GM12878 (cell line): ENCODE measurements at regions of chr3 and their contacts with region 1.

Region 1: GRCh38 chr3:115092220-115092791 is 54.8 kb downstream of the ZBTB20 start:
- DNase-seq: peak; percentile 26
- ATAC-seq: peak; percentile 81
- H3K4me3 ChIP-seq: no peak overlapping the region
- H3K27ac ChIP-seq: no peak overlapping the region
- H3K4me1 ChIP-seq: no peaks in the 10 kb centered on the region
- H3K27me3 ChIP-seq: no peaks in the 10 kb centered on the region
- CTCF ChIP-seq: peak; percentile 78 to 82 (median 78)
- EP300 ChIP-seq: no peak
- POLR2A ChIP-seq: no peak
- RAD21 ChIP-seq: peak; percentile 93

Region 2: GRCh38 chr3:115141033-115141757 is 48.9 kb after region 1 on chr3:
- CTCF ChIA-PET with region 1: interaction called, 10 read pairs
- POLR2A ChIA-PET with region 1: interaction called, 3 read pairs
- RAD21 ChIA-PET with region 1: interaction called, 7 read pairs
- SMC1A ChIA-PET with region 1: interaction called, 4 read pairs
- in situ Hi-C with region 1: no loop called
- intact Hi-C with region 1: no loop called
- DNase-seq: no peak
- ATAC-seq: peak; percentile 63
- H3K4me3 ChIP-seq: no peak overlapping the region
- H3K27ac ChIP-seq: peak overlapping the region; percentile 30
- H3K4me1 ChIP-seq: peaks cover 13% of the 10 kb centered on the region; the same call in 1 of the 2 replicates
- H3K27me3 ChIP-seq: no peaks in the 10 kb centered on the region
- CTCF ChIP-seq: no peak
- EP300 ChIP-seq: no peak
- POLR2A ChIP-seq: no peak
- RAD21 ChIP-seq: no peak

Region 3: GRCh38 chr3:115169808-115170207 is 77.5 kb after region 1 on chr3:
- CTCF ChIA-PET with region 1: interaction called, 67 read pairs
- POLR2A ChIA-PET with region 1: no interaction called
- RAD21 ChIA-PET with region 1: interaction called, 5 read pairs
- SMC1A ChIA-PET with region 1: interaction called, 27 read pairs
- in situ Hi-C with region 1: no loop called
- intact Hi-C with region 1: loop called (anchors 1 kb)
- DNase-seq: no peak
- ATAC-seq: no peak
- H3K4me3 ChIP-seq: no peak overlapping the region
- H3K27ac ChIP-seq: no peak overlapping the region
- H3K4me1 ChIP-seq: no peaks in the 10 kb centered on the region
- H3K27me3 ChIP-seq: no peaks in the 10 kb centered on the region; a peak in 1 of 4 replicates
- CTCF ChIP-seq: no peak; a peak in 2 of 6 replicates
- EP300 ChIP-seq: no peak
- POLR2A ChIP-seq: no peak
- RAD21 ChIP-seq: no peak

Region 4: DNA sequence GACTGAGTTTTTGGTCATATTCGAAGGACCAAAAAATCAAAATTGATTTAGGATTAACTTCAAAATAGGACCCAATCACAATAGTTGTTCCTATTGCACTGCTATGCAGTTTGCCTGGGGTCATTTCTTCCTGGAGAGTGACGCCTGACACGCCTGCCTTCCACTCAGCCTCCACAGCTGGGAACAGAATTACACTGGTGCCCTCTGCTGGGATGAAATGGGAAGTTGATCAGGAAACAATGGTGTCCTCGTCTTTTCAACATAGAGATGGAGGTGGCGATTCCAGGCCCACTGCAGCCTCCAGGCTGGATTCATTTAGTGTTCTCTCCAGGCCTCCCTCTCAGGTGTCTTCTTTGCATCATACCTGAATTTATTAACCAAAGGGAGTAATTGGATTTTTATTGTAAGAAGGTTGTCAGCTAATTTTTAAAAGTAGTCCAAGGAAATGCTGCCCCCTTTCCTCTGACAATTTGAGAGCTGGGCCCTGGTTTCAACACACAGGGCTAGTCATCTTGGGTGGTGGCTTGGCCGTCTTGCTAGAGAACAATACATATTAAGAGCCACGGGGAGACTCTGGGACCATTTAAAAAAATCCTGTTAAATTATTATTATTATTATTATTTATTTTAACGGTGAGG is 600.7 kb after region 1 on chr3:
- CTCF ChIA-PET with region 1: interaction called, 12 read pairs
- POLR2A ChIA-PET with region 1: no interaction called
- RAD21 ChIA-PET with region 1: interaction called, 5 read pairs
- SMC1A ChIA-PET with region 1: interaction called, 3 read pairs
- in situ Hi-C with region 1: loop called (anchors 10 kb)
- intact Hi-C with region 1: loop called (anchors 1 kb)
- DNase-seq: peak; percentile 32
- ATAC-seq: peak; percentile 99
- H3K4me3 ChIP-seq: no peak overlapping the region
- H3K27ac ChIP-seq: no peak overlapping the region
- H3K4me1 ChIP-seq: no peaks in the 10 kb centered on the region
- H3K27me3 ChIP-seq: no peaks in the 10 kb centered on the region
- CTCF ChIP-seq: peak; percentile 73 to 91 (median 82); a peak in 5 of 6 replicates
- EP300 ChIP-seq: no peak
- POLR2A ChIP-seq: no peak
- RAD21 ChIP-seq: peak; percentile 100

Region 5: DNA sequence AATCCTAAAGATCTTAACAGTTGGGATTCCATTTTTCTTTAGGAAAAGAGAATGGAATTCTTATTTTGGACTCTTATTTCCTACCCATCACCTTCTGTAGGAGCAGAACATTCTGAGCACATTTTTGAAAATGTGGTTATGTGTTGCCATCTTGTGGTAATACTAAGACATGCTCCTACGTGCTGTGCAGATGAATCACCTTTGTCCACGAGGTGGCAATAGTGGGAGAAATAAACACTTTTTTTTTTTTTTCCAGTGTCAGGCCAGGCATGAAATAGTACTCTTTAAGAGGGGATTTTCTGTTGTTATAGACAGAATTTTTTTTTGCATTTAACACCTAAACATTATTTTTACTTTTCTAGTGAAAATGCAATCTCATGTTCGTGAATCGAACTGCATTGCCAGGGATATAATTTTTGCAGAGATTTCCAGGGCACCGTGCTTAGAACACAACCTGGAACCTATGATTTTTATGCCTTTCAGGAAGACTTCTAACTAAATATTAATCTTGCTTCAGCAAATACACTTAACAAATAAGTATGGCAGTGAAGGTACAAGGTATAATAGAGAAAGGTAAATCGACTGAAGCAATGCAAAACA is 727.6 kb after region 1 on chr3:
- CTCF ChIA-PET with region 1: interaction called, 7 read pairs
- POLR2A ChIA-PET with region 1: no interaction called
- RAD21 ChIA-PET with region 1: no interaction called
- SMC1A ChIA-PET with region 1: interaction called, 3 read pairs
- in situ Hi-C with region 1: no loop called
- intact Hi-C with region 1: loop called (anchors 10 kb)
- DNase-seq: peak; percentile 45
- ATAC-seq: peak; percentile 96
- H3K4me3 ChIP-seq: no peak overlapping the region
- H3K27ac ChIP-seq: no peak overlapping the region
- H3K4me1 ChIP-seq: no peaks in the 10 kb centered on the region
- H3K27me3 ChIP-seq: no peaks in the 10 kb centered on the region
- CTCF ChIP-seq: peak; percentile 93 to 100 (median 99)
- EP300 ChIP-seq: no peak
- POLR2A ChIP-seq: no peak
- RAD21 ChIP-seq: peak; percentile 79